RWPE1 (cell line): ENCODE measurements at regions of chr3 and their contacts with region 1.

Region 1: DNA sequence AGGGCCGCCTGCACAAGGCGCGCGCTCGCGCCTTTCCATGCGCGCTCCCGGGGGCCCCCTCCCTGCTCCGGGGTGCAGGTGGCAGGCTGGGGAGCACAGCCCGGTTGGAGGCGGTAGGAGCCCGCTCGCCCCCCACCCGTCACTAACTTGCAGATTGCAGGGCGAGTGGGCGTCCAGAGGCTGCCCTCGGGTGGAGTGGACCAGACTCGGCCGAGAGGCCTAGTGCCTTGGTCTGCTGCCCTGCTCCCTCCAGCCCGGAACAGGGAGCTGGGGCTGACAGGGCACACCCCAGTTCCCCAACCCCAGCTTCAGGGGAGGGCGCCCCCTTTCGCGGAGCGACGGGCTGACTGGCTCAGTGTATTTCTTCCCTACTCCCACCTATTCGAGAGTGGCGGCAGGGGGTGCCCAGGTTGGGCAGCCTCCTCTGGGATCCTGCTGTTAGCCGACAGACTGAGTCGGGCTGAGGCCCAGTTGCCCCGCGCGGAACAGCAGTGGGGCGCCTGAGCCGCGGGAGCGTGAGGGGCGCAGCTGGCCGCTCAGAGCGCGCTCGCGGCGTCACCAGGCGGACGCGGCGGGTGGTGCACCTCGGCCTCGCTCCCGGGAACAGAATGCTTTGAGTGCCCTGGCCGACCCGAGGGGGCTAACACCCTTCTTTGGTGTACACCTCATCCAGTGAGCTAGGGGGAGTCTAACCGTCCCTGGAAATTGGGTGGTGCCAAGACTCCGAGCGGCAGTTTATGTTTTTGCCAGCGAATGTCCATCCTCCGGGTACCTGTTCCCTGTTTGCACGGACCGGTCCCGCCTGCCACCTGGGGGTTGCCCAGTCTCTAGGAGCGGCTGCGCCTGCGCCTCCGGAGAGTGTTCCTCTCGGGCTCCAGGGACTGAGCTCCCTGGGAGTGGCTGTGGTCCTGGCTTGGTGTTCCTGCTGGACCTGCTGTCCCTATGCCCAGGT is 610 bp upstream of the WNT7A start:
- DNase-seq: peak; percentile 60
- H3K27ac ChIP-seq: peak overlapping the region; percentile 81
- CTCF ChIP-seq: peak; percentile 97

Region 2: DNA sequence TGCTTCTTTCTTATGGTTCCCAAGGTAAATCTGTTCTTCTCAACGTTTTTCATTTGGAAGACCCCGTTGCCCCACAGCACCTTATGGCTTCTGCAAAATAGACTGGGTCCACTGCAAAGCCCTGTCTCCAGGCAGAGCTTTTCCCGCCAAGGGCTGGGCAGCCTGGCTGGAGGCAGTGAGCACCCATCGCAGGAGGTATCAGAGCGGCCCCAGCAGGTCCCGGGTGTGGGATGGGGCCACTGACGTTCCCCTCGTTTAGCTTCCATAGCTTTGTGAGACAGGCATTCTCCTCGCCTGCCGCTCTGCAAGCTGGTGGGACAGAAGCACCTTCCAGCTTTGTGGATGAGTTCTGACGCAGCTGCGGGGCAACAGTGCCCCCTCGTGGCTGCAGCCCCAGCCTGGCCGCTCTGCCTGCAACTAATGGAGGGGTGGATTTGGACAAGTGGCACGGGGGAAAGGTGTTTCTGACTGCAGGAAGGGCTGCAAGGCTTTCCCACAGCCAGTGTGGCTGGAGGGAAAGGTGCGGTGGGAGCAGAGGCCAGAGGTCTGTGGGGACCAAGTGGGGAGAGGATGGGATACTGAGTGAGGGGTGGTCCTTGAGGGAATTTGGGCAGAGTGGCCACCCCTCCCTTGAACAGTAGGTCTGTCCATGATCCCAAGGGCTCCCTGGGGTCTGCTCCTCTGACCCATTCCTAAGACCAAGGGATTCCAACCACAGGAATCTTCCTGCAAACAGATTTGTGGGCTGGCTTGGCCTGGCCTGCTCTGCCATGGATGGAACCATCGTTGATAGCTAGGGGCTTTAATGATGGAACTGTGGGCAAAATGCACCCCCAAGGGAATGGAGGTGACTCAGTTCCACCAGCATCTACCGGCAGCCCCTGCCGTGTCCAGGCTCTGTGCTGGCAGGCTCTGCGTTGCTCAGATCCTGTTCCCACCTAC is 232.2 kb before region 1 on chr3:
- CTCF ChIA-PET with region 1: interaction called, 12 read pairs
- POLR2A ChIA-PET with region 1: no interaction called
- DNase-seq: peak; percentile 83
- H3K27ac ChIP-seq: peak overlapping the region; percentile 94
- CTCF ChIP-seq: peak; percentile 97

Region 3: DNA sequence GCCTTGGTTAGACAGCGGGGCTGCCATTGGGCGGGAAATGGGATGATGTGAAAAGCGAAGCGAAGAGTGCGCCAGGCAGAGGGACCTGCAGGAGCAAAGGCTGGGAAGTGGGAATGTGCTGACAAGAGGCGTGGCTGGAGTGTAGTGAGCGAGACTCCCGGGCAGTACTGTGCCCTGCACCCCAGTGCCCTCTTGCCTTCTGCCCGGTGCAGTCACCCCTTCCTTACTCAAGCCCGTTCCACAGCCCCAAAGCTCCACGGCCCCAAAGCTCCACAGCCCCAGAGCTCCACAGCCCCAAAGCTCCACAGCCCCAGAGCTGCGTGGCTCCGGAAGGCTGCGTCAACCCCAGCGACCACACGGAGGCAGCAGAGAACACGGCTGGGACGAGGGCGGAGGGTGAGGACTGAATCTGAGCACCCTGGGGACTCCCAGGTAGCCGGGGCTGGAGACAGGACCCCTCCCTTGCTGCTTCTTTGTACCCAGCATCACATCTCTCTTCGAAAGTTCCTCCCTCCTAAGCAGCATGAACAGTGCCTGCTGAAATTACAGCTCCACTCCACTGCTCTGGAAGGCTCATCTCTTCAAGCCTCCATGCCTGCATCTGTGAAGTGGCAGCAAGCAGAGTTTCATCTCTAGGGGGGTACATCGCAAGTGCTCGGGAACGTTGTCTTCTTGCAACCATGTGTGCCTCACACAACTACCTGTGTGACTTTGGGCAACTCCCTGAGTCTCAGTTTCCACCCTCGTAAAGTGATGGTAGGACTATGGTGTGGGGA is 222.6 kb before region 1 on chr3:
- CTCF ChIA-PET with region 1: interaction called, 71 read pairs
- POLR2A ChIA-PET with region 1: no interaction called
- DNase-seq: peak; percentile 75
- H3K27ac ChIP-seq: no peak overlapping the region
- CTCF ChIP-seq: peak; percentile 93

Region 4: GRCh38 chr3:13762906-13763305 is 117.6 kb before region 1 on chr3:
- CTCF ChIA-PET with region 1: interaction called, 13 read pairs
- POLR2A ChIA-PET with region 1: no interaction called
- DNase-seq: no peak
- H3K27ac ChIP-seq: no peak overlapping the region
- CTCF ChIP-seq: no peak

Region 5: DNA sequence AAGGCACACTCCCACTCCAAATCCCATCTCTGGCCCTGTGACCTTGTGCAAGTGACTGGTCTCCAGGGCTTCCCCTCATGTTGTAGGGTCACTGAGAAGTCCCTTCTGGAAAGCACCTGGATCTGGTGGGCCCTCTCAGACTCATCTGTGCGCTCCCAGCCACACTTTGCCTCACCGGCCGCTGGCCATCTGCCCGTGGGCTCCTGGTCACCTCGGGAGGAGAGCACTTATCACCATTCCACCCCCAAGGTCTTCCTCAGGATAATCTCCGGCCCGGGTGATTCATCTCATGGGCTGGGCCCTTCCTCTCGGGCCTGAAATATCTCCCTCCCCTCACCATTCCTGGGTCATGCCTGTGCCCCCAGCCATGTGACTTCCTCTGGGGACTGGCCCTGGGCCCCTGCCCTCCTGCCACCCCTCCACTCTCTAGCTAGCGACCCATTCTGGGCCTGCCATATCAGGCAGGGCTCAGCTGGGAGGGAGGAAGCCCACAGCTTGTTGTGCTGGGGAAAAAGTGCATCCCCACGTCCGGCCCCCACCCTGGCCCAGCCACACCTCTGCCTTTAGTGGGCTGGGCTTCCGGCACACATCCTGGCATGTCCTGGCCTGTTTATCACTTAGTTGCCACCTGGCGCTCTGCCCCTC is 10.0 kb after region 1 on chr3:
- CTCF ChIA-PET with region 1: interaction called, 13 read pairs
- POLR2A ChIA-PET with region 1: no interaction called
- DNase-seq: peak; percentile 80
- H3K27ac ChIP-seq: peak overlapping the region; percentile 85
- CTCF ChIP-seq: no peak

Region 6: DNA sequence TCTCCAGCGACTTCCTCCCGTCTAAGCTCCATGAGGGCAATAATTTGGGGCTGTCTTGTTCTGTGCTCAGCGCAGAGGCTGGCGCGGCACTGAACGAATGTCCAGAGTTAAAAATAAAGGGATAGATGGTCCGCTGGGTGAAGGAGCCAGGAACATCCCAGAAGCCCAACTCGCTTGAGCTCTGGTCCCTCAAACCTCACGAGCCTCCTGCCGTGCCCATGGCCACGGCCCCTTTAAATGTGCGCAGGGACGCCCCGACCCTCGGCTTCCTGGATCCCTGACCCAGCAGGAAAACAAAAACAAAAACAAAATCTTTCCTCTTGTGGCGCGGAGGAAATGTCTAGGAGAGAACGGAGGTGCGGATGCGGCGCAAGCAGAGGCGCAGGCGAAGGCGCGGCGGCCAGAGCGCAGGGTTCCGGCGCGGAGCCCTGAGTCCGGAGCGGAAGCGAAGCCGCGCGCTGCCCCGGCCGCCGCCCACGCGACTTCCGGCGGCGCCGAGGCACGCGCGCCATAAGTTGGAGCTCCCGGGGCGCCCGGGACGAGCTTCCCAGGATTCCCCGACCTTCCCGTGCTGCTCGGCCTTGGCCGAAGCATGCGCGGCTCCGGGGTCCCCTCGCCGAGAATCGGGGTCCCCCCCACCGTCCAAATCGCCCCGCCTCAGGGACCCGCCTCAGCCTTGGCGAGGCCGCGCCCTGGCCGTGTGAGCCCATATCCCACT is 52.3 kb after region 1 on chr3:
- CTCF ChIA-PET with region 1: no interaction called
- POLR2A ChIA-PET with region 1: no interaction called
- DNase-seq: peak; percentile 5
- H3K27ac ChIP-seq: no peak overlapping the region
- CTCF ChIP-seq: no peak

Region 7: GRCh38 chr3:14297784-14298236 is 417.3 kb after region 1 on chr3:
- CTCF ChIA-PET with region 1: no interaction called
- POLR2A ChIA-PET with region 1: no interaction called
- DNase-seq: peak; percentile 15
- H3K27ac ChIP-seq: no peak overlapping the region
- CTCF ChIP-seq: no peak